Activated T-helper 2 cell treated with anti-CD3 and anti-CD28 coated beads, Interferon-gamma antibody, Interleukin-2, Interleukin-4, amounts not matched to agents 10 μg/mL and 5 μg/mL and 100 μg/mL, durations not matched to agents 14 hours and 24 hours and 36 hours (primary cell): ENCODE measurements at regions of chr10 and their contacts with region 1.

Region 1: DNA sequence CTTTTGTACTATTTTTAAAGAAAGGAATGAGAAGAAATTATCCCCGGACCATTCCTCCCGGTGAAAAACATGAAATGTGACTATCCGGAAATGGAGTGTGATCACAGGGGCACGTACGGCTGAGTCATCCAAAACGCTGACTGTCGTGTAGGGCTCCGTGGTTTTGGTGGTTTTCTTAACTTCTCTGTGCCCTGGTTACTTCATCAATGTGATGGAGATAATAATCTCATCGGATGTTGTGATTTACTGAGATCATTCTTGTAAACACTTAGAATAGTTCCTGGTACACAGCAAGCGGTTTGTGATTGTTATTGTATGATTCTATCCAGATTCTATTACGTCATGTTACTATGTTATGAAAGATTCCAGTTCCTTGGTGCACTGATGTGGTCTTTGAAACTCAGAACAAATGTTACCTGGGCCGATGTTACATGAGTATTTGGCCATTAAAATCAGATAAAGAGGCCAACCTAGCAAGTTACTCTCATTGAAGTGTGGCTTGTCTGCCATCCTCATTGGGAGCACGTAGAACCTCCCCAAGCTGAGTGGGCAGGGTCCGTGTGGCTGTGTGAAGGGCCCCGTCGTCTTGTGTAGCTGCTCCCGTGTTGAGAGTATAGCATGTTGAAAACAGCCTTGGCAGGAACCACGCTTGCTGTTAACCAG is 99.5 kb downstream of the CAMK1D start:
- DNase-seq: peak; percentile 76
- H3K4me3 Mint-ChIP-seq: peak overlapping the region; percentile 59
- H3K27ac Mint-ChIP-seq: peak overlapping the region; percentile 71
- H3K4me1 Mint-ChIP-seq: peaks cover 21% of the 10 kb centered on the region
- H3K27me3 Mint-ChIP-seq: peaks cover 43% of the 10 kb centered on the region

Region 2: GRCh38 chr10:12348870-12349628 is 99.8 kb before region 1 on chr10 and contains the start of gene CAMK1D:
- intact Hi-C with region 1: loop called (anchors 1 kb)
- DNase-seq: peak; percentile 82
- H3K4me3 Mint-ChIP-seq: peak within 1 kb of the TSS; percentile 89
- H3K27ac Mint-ChIP-seq: peak within 1 kb of the TSS; percentile 90
- H3K4me1 Mint-ChIP-seq: peaks cover 21% of the 10 kb centered on the region
- H3K27me3 Mint-ChIP-seq: peaks cover 43% of the 10 kb centered on the region
- total RNA-seq, gene CAMK1D: 5.7 and 6.1 TPM in 2 replicates

Region 3: DNA sequence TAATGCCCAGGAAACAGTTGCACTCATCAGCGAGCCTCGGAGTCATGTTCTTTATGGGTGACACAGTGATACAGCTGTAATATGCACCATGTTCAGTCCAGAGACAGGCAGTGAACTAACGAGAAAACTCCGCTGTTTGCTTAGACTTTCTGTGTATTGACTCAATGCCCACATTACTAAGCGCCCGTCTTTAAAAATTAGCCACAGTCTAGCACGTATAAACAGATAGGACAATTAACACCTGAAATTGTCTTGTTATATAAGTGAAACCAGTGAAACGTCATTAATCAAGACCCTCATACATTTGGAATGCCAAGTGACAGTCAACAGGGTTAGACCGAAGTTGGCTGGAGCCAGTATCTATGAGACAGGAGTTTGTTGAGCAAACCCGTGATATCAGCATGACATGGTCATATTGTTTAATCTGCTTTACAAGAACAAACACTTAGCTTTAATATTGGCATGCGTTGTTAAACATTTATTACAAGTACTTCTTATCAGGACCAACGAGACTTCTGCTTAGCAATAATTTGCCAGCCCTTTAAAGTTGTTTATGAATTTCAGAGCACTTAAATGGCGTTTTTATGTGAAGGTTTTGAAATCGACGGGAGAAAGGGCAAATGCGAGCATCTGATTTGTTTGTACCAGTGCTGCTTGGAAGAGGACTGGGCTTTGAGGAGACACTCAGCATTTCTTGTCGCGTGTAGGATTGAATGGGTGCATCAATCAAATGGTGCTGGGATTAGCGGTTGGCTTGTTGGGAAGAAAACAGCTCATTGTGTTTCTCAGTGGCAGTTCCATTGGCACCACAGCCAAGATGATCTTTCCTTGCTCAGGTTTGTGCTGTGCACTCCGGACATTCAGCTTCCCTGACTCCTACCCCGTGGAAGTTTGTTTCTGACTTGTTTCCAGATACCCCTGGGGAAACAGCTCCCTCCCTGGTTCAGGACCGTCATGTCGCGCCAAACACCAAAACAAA is 43.2 kb before region 1 on chr10:
- intact Hi-C with region 1: loop called (anchors 1 kb)
- DNase-seq: no peak
- H3K4me3 Mint-ChIP-seq: no peak overlapping the region
- H3K27ac Mint-ChIP-seq: no peak overlapping the region
- H3K4me1 Mint-ChIP-seq: peaks cover 30% of the 10 kb centered on the region
- H3K27me3 Mint-ChIP-seq: peaks cover 11% of the 10 kb centered on the region

Region 4: DNA sequence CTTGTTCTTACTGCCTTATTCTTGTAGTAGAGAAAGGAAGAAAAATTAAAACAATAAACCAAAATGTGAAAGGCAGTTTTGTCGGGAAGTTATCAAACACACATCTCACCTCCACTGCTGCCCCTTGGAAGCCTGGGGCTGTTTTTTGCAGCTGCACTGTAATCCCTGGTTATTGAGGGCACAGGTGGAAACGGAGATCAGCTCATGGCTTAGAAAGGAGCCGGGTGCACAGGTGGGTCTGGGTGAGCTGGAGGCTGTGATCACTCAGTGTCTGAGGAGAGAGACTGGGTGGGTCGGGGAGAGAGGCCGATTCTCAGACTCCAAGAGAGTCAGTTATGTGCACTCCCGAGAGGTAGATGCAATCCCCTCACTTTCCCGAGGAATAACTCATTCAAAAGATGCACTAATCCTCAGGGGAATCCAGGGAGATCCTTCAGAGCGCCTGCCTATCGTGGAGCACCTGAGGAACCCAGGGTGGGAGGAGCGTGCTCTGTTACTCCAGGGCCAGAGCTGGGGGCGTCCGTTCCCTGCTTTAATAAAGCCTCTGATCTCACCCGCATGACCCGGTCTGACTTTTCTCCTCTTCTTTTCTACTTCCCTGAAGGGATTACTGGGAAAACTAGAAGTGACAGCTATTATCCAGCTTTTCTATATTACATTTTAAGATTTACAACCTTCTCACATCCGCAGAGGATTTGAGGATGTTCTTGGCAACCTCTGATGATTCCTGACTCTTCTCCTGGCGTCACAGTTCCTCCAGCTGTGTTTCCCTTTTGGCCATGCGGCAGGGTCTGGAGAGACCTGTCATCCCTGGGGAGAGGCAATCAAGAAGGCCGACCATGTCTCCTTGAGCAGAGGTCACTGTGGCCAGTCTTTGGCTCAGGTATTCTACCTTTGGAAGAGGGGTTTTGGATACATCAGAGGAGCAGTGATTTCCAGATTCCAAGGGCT is 17.4 kb before region 1 on chr10:
- intact Hi-C with region 1: no loop called
- DNase-seq: no peak
- H3K4me3 Mint-ChIP-seq: no peak overlapping the region
- H3K27ac Mint-ChIP-seq: no peak overlapping the region
- H3K4me1 Mint-ChIP-seq: no peaks in the 10 kb centered on the region
- H3K27me3 Mint-ChIP-seq: peaks cover 10% of the 10 kb centered on the region

Region 5: GRCh38 chr10:12625393-12626023 is 176.6 kb after region 1 on chr10:
- intact Hi-C with region 1: no loop called
- DNase-seq: no peak
- H3K4me3 Mint-ChIP-seq: no peak overlapping the region
- H3K27ac Mint-ChIP-seq: no peak overlapping the region
- H3K4me1 Mint-ChIP-seq: peaks cover 15% of the 10 kb centered on the region
- H3K27me3 Mint-ChIP-seq: peaks cover 2% of the 10 kb centered on the region

Region 6: DNA sequence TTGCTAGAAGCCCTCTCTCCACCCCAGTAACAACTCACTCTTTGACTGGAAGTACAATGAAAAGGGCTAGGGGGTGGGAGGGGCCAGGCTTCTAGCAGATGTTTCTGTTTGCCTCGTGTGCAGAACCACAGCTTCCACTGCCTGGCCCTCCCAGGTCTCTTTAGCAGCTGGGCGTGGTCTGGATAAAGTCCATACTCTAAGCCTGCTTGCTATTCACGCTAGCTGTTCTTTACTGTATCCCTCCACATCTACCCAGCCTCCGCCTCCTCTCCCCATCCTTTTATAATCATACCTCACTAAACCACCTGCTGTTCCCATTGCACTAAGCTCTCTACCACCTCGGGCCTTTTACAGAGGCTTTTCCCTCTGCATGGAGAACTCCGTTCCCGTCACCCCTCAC is 189.2 kb after region 1 on chr10:
- intact Hi-C with region 1: loop called (anchors 2 kb)
- DNase-seq: peak; percentile 28
- H3K4me3 Mint-ChIP-seq: no peak overlapping the region
- H3K27ac Mint-ChIP-seq: peak overlapping the region; percentile 29
- H3K4me1 Mint-ChIP-seq: peaks cover 45% of the 10 kb centered on the region
- H3K27me3 Mint-ChIP-seq: no peaks in the 10 kb centered on the region